ENCODE measurements at regions of chr10 and their contacts with region 1.

Region 1: GRCh38 chr10:34407324-34407805 is 407.7 kb downstream of the PARD3 start:
- DNase-seq: no peak
- H3K4me3 ChIP-seq: no peak overlapping the region
- H3K4me3 Mint-ChIP-seq: no peak overlapping the region
- H3K27ac Mint-ChIP-seq: no peak overlapping the region
- H3K4me1 ChIP-seq: peaks cover 24% of the 10 kb centered on the region
- H3K4me1 Mint-ChIP-seq: peaks cover 42% of the 10 kb centered on the region
- H3K27me3 ChIP-seq: no peaks in the 10 kb centered on the region
- H3K27me3 Mint-ChIP-seq: no peaks in the 10 kb centered on the region
- CTCF ChIP-seq: no peak

Region 2: GRCh38 chr10:34427911-34428216 is 20.5 kb after region 1 on chr10:
- CTCF ChIA-PET with region 1: no interaction called
- POLR2A ChIA-PET with region 1: no interaction called
- intact Hi-C with region 1: loop called (anchors 2 kb)
- DNase-seq: no peak
- H3K4me3 ChIP-seq: no peak overlapping the region
- H3K4me3 Mint-ChIP-seq: peak overlapping the region; percentile 43
- H3K27ac Mint-ChIP-seq: peak overlapping the region; percentile 83
- H3K4me1 ChIP-seq: peaks cover 30% of the 10 kb centered on the region
- H3K4me1 Mint-ChIP-seq: peaks cover 44% of the 10 kb centered on the region
- H3K27me3 ChIP-seq: no peaks in the 10 kb centered on the region
- H3K27me3 Mint-ChIP-seq: no peaks in the 10 kb centered on the region
- CTCF ChIP-seq: no peak

Region 3: GRCh38 chr10:34677591-34677990 is 270.2 kb after region 1 on chr10:
- CTCF ChIA-PET with region 1: no interaction called
- POLR2A ChIA-PET with region 1: no interaction called
- intact Hi-C with region 1: no loop called
- DNase-seq: no peak
- H3K4me3 ChIP-seq: no peak overlapping the region
- H3K4me3 Mint-ChIP-seq: no peak overlapping the region
- H3K27ac Mint-ChIP-seq: no peak overlapping the region
- H3K4me1 ChIP-seq: no peaks in the 10 kb centered on the region
- H3K4me1 Mint-ChIP-seq: peaks cover 5% of the 10 kb centered on the region
- H3K27me3 ChIP-seq: no peaks in the 10 kb centered on the region
- H3K27me3 Mint-ChIP-seq: no peaks in the 10 kb centered on the region
- CTCF ChIP-seq: peak in 1 of 2 experiments; percentile 30